WTC11 (cell line): ENCODE measurements at regions of chr15 and their contacts with region 1.

Region 1: DNA sequence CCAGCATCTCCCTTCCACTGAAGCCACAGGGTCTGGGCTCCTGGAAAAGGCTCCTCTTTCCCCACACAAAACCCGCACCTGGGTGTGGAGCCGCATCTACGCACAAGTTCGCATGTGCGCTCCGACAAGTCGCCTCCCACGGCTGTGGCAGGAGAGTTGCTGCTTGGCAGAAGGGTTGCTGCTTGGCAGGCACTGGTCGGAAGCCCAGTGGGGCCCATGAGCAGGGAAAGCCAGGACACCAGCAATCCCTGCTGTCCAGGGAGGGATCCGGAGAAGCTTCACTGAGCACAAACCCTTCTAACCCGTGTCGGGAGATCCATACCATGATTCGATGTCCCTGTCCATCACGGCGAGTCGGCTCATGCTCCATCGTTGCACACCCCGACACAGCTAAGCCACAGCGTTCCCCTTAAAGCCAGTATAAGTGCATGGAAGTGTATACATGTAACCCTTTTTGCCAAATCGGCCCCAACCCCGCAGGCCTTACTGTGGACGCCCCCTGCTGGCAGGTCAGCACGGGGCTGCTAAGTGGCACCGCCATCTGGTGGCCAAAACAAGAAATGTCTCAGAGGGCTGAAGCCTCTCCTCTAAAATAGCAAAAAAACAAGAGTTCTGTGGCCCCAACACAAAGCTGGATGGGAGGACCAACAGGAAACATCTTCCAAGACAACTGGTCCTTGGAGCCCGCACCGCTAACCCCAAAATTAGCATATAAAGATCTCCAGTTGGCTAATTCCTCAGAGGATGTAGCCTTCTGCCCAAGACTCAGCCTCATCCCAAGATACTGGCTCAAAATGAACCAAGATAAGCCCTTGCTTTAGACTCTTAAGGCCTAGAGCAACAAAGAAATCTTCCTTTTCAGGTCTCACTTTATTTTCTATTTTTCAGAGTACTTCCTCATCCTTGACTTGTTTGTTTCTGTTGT is 8.3 kb downstream of the ANKRD63 start:
- DNase-seq: peak; percentile 88
- ATAC-seq: peak; percentile 35
- H3K4me3 Mint-ChIP-seq: no peak overlapping the region
- H3K27ac Mint-ChIP-seq: peak overlapping the region; percentile 79; the same call in 1 of the 2 replicates
- H3K4me1 Mint-ChIP-seq: peaks cover 25% of the 10 kb centered on the region
- H3K27me3 Mint-ChIP-seq: peaks cover 17% of the 10 kb centered on the region
- CTCF ChIP-seq: peak; percentile 100

Region 2: GRCh38 chr15:40044717-40045571 is 229.7 kb before region 1 on chr15:
- CTCF ChIA-PET with region 1: interaction called, 97 read pairs
- POLR2A ChIA-PET with region 1: no interaction called
- DNase-seq: peak; percentile 85
- ATAC-seq: peak; percentile 96
- H3K4me3 Mint-ChIP-seq: peak overlapping the region; percentile 65
- H3K27ac Mint-ChIP-seq: no peak overlapping the region
- H3K4me1 Mint-ChIP-seq: peaks cover 39% of the 10 kb centered on the region
- H3K27me3 Mint-ChIP-seq: no peaks in the 10 kb centered on the region
- CTCF ChIP-seq: peak; percentile 45; the same call in 1 of the 2 replicates

Region 3: DNA sequence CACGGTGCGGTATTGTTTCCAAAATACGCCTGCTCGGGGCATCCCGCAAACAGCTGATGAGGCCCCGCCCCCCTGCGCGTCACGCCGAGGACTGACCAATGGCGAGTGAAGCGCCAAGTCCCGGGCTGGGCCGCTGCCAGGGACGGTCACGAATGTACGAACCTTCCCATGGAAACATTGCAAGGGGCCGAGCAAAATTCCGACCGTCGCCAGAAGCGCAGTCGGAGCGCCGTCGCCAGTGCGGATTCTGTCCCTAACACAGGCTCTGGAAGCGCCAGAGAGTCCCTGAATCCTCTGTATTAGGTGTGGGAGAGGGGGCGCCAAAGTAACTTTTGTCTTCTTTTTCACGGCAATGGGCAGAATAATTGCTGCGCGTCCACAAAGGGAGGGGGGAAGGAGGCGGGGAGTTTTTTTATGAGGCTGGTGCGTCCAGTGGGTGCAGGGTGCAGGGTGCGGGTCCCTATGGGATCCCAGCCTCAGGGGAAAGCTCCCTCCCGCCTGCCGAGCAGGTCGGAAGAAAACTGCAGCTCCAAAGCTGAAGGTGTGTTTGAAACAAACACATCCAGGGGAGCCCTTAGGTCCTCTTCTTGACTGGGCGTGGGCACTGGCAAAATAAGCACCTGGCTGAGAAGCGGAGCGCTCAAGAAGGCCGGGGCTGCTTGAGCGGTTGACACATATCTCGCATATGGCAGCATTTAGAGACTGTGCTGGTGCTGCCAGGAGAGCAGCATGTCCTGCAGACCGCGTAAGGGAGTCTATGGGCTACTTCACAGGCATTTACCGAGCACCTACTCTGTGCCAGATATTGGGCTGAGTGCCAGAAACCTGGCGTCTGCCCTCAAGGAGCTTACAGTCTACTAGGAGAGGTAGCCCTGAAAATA is 165.5 kb before region 1 on chr15 and contains the start of gene BMF:
- CTCF ChIA-PET with region 1: interaction called, 15 read pairs
- POLR2A ChIA-PET with region 1: no interaction called
- DNase-seq: peak; percentile 100
- ATAC-seq: peak; percentile 70
- H3K4me3 Mint-ChIP-seq: peak within 1 kb of the TSS; percentile 89
- H3K27ac Mint-ChIP-seq: peak within 1 kb of the TSS; percentile 95
- H3K4me1 Mint-ChIP-seq: peaks cover 69% of the 10 kb centered on the region
- H3K27me3 Mint-ChIP-seq: peaks cover 2% of the 10 kb centered on the region; the same call in 1 of the 2 replicates
- CTCF ChIP-seq: no peak
- total RNA-seq, gene BMF: 32.9 to 36.9 TPM (median 36.6 TPM) in 3 replicates

Region 4: DNA sequence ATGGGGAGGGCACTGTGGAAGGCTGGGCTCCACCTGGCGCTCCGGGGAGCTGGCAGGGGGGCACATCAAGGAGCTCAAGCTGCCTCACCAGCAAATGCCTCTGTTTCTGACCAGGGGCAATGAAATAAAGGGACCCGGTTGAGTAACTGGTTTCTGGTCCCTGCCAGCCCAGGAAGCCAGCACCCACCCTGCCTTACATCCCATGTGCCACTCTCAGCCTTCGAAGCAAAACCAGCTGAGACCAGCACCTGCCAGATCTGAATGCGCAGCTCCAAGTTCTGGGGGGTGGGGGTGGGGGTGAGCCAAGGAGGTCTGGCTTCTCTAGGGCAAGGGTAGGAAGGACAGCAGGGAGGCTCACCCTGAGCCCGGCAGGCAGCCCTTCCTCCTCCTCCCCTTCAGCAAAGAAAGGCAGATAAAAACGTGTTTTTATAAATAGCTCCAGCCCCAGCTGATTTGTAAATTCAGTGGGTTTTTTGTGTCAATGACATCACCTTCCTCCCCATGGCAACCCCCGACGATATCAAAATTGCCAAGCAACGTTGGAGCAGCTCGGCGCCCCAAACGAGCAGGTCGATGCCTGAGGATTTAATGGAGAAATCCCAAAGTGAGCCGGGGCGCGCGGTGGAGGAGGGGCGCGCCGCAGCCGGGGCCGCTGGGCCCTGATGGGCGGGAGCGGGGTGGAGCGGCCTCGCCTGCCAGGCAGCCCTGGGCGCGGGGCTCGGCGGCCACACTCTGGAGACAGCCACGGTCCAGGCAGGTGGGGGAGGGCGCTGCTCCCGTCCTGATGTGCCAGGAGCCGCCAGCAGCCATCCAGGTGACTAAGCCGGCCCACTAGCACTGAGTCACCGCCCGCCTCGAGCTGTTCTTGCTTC is 35.8 kb before region 1 on chr15 and contains the start of gene PAK6:
- CTCF ChIA-PET with region 1: interaction called, 273 read pairs
- POLR2A ChIA-PET with region 1: interaction called, 4 read pairs
- DNase-seq: peak; percentile 82
- ATAC-seq: peak; percentile 92
- H3K4me3 Mint-ChIP-seq: peak within 1 kb of the TSS; percentile 60
- H3K27ac Mint-ChIP-seq: no peak within 1 kb of the TSS
- H3K4me1 Mint-ChIP-seq: peaks cover 12% of the 10 kb centered on the region
- H3K27me3 Mint-ChIP-seq: no peaks in the 10 kb centered on the region
- CTCF ChIP-seq: no peak
- total RNA-seq, gene PAK6: 8.7 to 11.7 TPM (median 9.6 TPM) in 3 replicates

Region 5: DNA sequence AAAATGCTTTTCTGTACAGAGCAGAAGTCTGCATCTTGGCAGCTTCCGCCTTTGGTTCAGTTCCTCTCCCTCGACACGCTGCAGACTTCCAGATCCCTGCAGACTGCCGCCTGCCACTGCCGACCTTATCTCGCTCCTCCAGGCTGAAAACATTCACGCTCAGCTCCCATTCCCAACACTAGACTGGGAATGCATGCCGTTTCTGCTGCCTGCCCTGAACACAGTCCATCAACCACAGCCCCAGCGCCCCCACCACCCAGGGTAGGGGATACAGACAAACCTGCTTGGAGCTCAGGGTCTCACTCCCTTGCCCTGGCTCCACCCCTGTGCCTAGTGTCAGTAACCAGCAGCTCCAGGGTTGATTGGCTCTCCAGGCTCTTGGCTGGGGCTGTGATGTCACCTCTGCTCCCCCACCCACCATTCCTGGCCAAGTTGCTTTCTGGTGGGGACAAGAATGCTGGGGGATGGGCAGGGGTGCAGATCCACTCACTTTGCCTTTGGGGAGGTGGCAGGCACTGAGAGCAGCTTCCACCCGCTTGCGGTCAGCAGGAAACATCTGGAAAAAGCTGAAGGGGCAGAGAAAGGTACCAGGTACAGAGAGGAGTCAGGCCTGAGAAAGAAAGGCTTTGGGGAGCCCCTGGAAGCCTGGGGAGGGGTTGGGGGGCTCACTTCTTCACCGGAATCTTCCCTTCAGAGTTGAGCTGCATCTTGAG is 27.0 kb after region 1 on chr15:
- CTCF ChIA-PET with region 1: interaction called, 690 read pairs
- POLR2A ChIA-PET with region 1: no interaction called
- DNase-seq: peak; percentile 71
- ATAC-seq: peak; percentile 96
- H3K4me3 Mint-ChIP-seq: peak overlapping the region; percentile 22
- H3K27ac Mint-ChIP-seq: no peak overlapping the region
- H3K4me1 Mint-ChIP-seq: peaks cover 24% of the 10 kb centered on the region
- H3K27me3 Mint-ChIP-seq: no peaks in the 10 kb centered on the region; the same call in 1 of the 2 replicates
- CTCF ChIP-seq: no peak

Region 6: GRCh38 chr15:40338041-40338657 is 63.5 kb after region 1 on chr15:
- CTCF ChIA-PET with region 1: interaction called, 181 read pairs
- POLR2A ChIA-PET with region 1: no interaction called
- DNase-seq: peak; percentile 92
- ATAC-seq: peak; percentile 82
- H3K4me3 Mint-ChIP-seq: 0 out of 2 replicates have a peak overlapping the region, but pooled peaks have one; percentile 27
- H3K27ac Mint-ChIP-seq: no peak overlapping the region
- H3K4me1 Mint-ChIP-seq: peaks cover 42% of the 10 kb centered on the region
- H3K27me3 Mint-ChIP-seq: peaks cover 5% of the 10 kb centered on the region
- CTCF ChIP-seq: peak; percentile 87

Region 7: GRCh38 chr15:40421246-40422157 is 146.9 kb after region 1 on chr15:
- CTCF ChIA-PET with region 1: interaction called, 18 read pairs
- POLR2A ChIA-PET with region 1: no interaction called
- DNase-seq: peak; percentile 89
- ATAC-seq: peak; percentile 88
- H3K4me3 Mint-ChIP-seq: peak overlapping the region; percentile 45
- H3K27ac Mint-ChIP-seq: peak overlapping the region; percentile 22; the same call in 1 of the 2 replicates
- H3K4me1 Mint-ChIP-seq: peaks cover 14% of the 10 kb centered on the region
- H3K27me3 Mint-ChIP-seq: no peaks in the 10 kb centered on the region; the same call in 1 of the 2 replicates
- CTCF ChIP-seq: peak; percentile 70